ENCODE measurements at regions of chr1 and their contacts with region 1.

Region 1: DNA sequence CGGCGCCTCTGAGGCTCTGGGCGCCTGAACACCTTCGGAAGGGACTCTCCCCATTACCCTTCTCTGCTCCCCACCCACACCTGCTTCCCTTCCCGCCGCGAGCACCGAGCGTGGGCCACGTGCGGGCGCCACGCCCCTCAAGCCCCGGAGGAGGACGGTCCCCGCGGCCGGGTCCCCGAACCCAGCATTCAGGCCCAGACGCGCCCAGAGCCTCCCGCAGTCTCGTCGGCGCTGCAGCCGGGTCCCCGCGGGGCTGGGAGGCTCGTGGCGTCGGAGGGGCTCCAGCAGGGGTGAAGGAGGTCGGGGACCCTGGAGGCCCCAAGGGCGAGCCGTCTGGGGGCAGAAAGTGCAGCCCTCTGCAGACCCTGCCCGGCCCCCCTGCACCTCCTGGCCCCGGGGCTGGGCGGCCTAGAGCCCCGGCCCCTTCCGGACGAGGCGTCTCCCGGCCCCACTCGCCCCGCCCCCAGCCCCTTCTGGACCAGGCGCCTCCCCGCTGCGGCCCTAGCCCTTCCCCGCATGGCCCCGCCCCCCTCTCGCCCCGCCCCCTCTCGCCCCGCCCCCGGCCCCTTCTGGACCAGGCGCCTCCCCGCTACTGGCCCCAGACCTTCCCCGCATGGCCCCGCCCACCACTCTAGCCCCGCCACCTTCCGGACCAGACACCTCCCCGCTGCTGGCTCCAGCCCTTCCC is 378 bp upstream of the SMIM1 start:
- DNase-seq: peak; percentile 56
- H3K4me3 ChIP-seq: peak overlapping the region; percentile 44 to 58 (median 57)
- H3K27ac ChIP-seq: no peak overlapping the region
- H3K4me1 ChIP-seq: peaks cover 18% of the 10 kb centered on the region
- H3K27me3 ChIP-seq: no peaks in the 10 kb centered on the region
- CTCF ChIP-seq: no peak

Region 2: DNA sequence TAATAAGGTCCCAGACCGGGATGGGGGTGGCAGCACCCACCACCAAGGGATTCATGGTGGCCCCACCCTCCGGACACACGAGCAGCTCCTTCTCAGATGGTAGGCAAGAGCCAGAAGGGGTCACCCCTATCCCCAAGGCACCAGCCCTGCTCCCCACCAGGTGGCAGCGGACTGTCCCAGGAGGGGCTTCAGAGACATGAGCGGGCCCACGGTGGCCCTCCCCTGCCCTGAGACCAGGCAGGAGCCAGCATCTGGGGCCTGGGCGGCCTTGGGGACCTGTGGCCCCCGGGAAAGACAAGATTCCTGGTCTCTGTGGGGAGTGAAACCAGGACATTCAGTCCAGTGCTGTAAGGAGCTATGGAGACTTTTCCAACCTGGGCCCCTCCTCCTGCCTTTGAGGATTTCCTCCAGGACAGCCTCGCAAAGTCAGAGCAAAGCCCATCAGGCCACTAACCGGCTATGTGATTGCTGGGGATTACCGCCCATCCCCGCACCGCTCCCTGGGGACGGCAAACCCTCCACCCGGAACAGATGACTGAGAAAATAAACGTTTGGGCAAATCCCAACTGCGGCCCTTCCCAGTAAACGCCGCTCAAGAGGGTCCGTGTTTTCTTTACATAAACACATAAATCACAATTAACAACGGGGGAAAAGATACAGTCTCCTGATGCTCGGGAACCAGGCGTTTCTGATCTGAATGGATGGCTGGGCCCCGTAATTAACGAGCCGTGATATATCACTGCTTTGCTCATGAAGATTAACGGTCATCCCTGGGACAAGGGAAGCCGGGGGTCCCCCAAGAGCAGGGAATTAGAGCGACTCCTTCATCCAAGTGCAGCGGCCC is 368.6 kb before region 1 on chr1:
- CTCF ChIA-PET with region 1: no interaction called
- dilution Hi-C with region 1: no loop called
- in situ Hi-C with region 1: no loop called
- intact Hi-C with region 1: no loop called
- DNase-seq: no peak
- H3K4me3 ChIP-seq: no peak overlapping the region
- H3K27ac ChIP-seq: no peak overlapping the region
- H3K4me1 ChIP-seq: peaks cover 2% of the 10 kb centered on the region
- H3K27me3 ChIP-seq: no peaks in the 10 kb centered on the region
- CTCF ChIP-seq: no peak

Region 3: DNA sequence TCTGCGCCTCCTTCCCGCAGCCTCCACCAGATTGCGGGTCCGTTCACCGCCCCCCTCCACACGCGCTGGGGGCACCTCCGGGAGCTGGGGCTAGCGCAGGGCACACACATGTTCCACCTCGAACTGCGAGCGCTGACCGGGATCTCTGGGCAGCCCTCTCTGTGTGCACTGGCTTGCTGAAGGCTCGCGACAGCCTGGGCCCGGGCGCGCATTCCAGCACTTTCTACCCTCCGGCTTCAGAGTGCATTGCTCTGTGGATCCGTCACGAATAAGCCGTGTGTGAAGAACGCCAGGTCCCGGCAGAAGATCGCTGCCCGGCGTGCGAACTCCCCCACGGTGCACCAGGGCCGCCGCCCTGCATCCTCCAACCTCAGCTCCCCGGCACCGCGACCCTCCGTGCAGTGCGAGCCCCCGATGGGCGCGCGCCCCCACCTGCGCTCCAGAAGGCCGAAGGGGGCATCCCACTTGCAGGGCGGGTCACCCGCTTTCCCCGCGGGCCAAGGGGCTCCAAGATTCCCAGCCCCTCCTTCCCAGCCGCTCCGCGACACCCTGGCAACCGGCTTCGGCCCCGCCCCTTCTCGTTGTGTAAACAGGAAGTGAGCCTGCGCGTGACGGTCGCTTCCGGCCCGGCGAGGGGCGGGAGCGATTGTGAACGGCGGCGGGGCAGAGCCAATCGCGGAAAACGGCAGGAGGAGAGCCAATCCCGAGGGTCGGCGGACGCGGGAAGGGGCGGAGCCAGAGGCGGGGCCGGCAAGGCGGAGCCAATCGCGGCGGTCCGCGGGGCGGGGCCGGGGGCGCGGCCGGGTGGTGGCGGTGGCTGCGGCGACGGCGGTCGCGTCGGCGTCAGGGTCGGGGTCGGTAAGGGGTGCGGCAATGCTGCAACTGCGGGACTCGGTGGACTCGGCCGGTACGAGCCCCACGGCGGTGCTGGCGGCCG is 147.7 kb before region 1 on chr1 and contains the start of gene TPRG1L:
- CTCF ChIA-PET with region 1: no interaction called
- dilution Hi-C with region 1: loop called (anchors 5 kb)
- in situ Hi-C with region 1: no loop called
- intact Hi-C with region 1: no loop called
- DNase-seq: peak; percentile 94
- H3K4me3 ChIP-seq: peak within 1 kb of the TSS; percentile 75 to 100 (median 77)
- H3K27ac ChIP-seq: no peak within 1 kb of the TSS
- H3K4me1 ChIP-seq: peaks cover 18% of the 10 kb centered on the region
- H3K27me3 ChIP-seq: no peaks in the 10 kb centered on the region
- CTCF ChIP-seq: no peak
- total RNA-seq, gene TPRG1L: 44.2 to 48.6 TPM

Measured in mammary epithelial cell (primary cell).